Activated CD4-positive, alpha-beta memory T cell treated with anti-CD3 and anti-CD28 coated beads for 36 hours (primary cell): ENCODE measurements at regions of chr19 and their contacts with region 1.

Region 1: GRCh38 chr19:11987405-11988281 is 22.8 kb downstream of the ZNF763 start:
- DNase-seq: peak; percentile 97
- H3K4me3 Mint-ChIP-seq: peak overlapping the region; percentile 93
- H3K27ac Mint-ChIP-seq: peak overlapping the region; percentile 93
- H3K4me1 Mint-ChIP-seq: peaks cover 18% of the 10 kb centered on the region
- H3K27me3 Mint-ChIP-seq: no peaks in the 10 kb centered on the region

Region 2: DNA sequence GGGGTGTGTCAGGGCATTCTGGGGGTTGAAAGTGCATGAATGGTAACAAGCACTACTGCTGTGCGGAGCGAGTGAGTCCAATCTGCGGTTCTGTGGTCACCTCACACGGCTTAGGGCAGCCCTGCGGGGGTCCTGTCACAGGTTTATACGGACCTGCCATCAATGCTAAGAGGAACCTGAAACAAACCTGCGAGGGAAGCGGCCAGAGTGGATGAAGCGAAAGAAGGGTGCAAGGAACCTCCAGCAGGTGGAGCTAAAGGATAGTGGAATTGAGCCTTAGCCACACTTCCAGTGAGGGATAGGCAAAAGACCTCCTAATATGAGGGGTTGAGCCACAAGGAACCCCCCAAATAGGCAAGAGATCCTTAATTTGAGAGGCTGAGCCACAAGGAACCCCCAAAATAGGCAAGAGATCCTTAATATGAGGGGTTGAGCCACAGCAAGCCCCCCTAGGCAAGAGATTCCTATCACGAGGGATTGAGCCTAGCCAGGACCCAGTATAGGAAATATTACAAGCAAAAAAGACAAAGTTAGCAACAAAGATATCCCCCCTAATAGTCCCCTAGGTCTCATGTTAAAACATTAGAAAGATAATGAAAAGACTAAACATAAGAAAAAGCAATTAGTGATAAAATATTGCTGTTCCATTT is 106.4 kb before region 1 on chr19:
- CTCF ChIA-PET with region 1: interaction called, 29 read pairs
- POLR2A ChIA-PET with region 1: no interaction called
- intact Hi-C with region 1: loop called (anchors 5 kb)
- DNase-seq: peak; percentile 69
- H3K4me3 Mint-ChIP-seq: no peak overlapping the region
- H3K27ac Mint-ChIP-seq: no peak overlapping the region
- H3K4me1 Mint-ChIP-seq: no peaks in the 10 kb centered on the region
- H3K27me3 Mint-ChIP-seq: no peaks in the 10 kb centered on the region

Region 3: DNA sequence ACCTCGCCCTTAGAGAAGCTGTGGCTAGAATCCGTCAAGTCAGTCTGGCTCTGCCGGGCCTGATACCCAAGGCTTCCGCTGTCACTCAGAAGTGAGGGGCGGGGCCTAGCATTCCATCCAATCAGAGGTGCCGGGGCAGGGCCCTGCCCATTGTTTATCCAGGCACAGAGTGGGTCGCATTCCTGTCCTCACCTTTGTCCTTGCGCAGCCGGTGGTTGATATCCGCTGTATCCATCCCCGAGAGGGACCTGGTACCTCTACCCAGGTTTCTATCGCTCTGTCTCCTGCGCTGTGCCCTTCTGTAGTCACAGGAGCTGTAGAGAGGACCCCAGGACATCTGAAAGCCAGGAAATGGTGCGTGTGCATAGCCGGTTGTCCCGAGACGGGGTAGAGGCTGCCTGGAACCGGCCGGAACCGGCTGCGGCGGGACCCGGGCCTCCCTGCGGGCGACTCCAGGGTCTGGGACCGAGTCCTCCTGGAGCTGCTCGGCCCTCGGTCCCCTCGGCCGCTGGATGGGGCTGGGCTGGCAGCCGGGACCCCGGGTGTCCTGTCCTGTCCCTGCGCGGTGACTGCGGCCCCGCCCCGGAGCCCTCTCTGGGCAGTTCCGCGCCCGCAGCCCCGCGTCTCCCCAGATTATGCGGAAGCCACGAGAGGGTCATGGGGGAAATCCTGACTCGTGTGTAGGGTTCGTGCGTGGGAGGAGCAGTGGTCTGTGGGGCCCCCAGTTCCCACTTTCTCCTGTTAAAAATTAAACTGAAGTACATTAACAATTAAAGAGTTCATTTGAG is 22.6 kb before region 1 on chr19 and contains the start of gene ZNF763:
- CTCF ChIA-PET with region 1: interaction called, 106 read pairs
- POLR2A ChIA-PET with region 1: interaction called, 8 read pairs
- intact Hi-C with region 1: loop called (anchors 1 kb)
- DNase-seq: peak; percentile 94
- H3K4me3 Mint-ChIP-seq: peak within 1 kb of the TSS; percentile 88
- H3K27ac Mint-ChIP-seq: peak within 1 kb of the TSS; percentile 79
- H3K4me1 Mint-ChIP-seq: peaks cover 20% of the 10 kb centered on the region
- H3K27me3 Mint-ChIP-seq: no peaks in the 10 kb centered on the region
- total RNA-seq, gene ZNF763: 0.97 to 1.6 TPM

Region 4: DNA sequence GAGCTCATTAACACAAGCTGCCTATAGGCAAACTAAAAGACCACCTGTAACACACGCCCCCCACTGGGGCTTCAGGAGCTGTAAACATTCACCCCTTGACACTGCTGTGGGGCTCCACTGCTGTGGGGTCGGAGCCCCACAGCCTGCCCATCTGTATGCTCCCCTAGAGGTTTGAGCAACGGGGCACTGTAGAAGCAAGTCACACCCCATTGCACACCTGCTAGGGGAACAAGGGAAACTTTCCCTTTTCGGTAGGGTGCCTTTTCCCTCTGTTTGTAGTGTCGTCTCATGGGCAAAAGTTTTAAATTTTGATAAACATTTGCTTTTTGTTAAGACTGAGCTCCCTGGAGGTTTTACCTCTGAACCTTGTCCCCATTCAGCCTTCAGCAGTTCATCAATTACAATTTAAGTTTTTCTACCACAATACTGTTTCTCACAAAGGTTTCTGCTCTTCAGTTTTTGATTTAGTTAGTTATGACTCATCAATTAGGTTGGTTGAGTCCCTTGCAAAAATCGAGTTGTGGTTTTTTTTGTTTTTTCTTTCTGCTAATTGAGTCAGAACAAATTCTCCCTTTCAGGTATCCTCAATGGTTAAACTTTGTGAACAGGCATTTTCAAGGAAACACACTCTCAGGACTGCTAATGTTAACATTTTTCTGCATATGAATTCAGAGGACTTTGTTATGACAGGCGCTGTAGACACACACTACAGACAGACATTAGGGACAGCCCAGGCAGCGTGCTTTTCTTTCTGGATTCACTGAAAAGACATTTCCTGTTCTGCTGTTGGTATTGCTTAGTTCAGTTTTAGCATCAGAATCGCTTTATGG is 12.7 kb after region 1 on chr19:
- CTCF ChIA-PET with region 1: interaction called, 6 read pairs
- POLR2A ChIA-PET with region 1: interaction called, 3 read pairs
- intact Hi-C with region 1: loop called (anchors 1 kb)
- DNase-seq: peak; percentile 54
- H3K4me3 Mint-ChIP-seq: no peak overlapping the region
- H3K27ac Mint-ChIP-seq: peak overlapping the region; percentile 72
- H3K4me1 Mint-ChIP-seq: peaks cover 20% of the 10 kb centered on the region
- H3K27me3 Mint-ChIP-seq: no peaks in the 10 kb centered on the region

Region 5: DNA sequence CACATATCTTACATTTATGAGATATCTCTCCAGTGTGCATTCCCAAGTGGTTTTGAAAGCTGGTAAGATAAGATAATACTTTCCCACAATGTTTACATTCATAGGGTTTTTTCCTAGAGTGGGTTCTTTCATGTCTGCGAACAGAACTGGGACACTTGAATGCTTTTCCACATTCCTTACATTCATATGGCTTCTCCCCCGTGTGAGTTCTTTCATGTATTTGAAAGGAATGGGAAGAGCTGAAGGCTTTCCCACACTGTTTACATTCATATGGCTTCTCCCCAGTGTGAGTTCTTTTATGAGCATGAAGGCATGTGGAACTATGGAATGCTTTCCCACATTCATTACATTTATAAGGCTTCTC is 28.1 kb after region 1 on chr19:
- CTCF ChIA-PET with region 1: no interaction called
- POLR2A ChIA-PET with region 1: no interaction called
- intact Hi-C with region 1: no loop called
- DNase-seq: no peak
- H3K4me3 Mint-ChIP-seq: no peak overlapping the region
- H3K27ac Mint-ChIP-seq: no peak overlapping the region
- H3K4me1 Mint-ChIP-seq: no peaks in the 10 kb centered on the region
- H3K27me3 Mint-ChIP-seq: no peaks in the 10 kb centered on the region

Region 6: GRCh38 chr19:12187625-12188024 is 200.0 kb after region 1 on chr19:
- CTCF ChIA-PET with region 1: no interaction called
- POLR2A ChIA-PET with region 1: no interaction called
- intact Hi-C with region 1: no loop called
- DNase-seq: no peak
- H3K4me3 Mint-ChIP-seq: no peak overlapping the region
- H3K27ac Mint-ChIP-seq: no peak overlapping the region
- H3K4me1 Mint-ChIP-seq: peaks cover 3% of the 10 kb centered on the region
- H3K27me3 Mint-ChIP-seq: no peaks in the 10 kb centered on the region

Region 7: DNA sequence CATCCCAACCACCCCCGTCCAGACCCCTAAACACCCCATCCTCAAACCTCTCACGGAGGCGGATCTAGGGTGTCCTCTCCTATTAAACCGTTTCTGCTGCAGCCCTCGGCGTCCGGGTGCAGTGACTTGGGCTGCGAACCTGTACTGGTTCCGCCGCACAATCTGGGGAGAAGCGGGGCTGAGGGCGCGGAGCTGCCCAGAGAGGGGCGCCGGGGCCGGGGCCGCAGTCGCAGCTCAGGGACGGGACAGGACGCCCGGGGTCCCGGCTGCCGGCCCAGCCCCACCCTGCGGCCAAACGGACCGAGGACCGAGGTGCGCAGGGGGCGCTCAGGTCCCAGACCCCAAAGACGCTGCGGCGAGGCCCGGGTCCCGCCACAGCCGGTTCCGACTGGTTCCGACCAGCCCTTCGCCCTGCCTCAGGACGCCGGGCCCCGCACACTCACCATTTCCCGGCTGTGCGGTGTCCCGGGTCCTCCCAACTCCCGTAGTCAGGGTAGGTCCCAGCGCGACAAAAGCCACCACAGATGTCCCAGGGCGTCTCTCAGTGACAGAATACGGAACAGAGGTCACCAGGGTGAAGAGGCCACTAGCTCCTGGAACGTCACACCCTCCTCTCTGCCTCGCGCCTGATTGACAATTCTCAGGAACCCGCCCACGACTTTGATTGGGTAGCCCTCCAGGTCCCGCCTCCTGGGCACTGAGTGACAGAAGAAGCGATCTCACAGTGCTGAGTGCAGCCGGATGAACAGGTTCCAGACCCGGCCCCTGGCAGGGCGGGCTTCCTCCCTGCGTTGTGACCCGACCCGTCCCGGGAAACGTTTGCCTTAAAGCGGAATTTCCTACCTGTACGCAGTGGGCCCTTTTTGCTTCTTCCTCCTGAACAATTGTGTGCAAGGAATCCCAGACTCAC is 306.9 kb after region 1 on chr19 and contains the start of gene ZNF44:
- CTCF ChIA-PET with region 1: no interaction called
- POLR2A ChIA-PET with region 1: no interaction called
- intact Hi-C with region 1: loop called (anchors 1 kb)
- DNase-seq: peak; percentile 99
- H3K4me3 Mint-ChIP-seq: peak within 1 kb of the TSS; percentile 98
- H3K27ac Mint-ChIP-seq: peak within 1 kb of the TSS; percentile 98
- H3K4me1 Mint-ChIP-seq: peaks cover 27% of the 10 kb centered on the region
- H3K27me3 Mint-ChIP-seq: no peaks in the 10 kb centered on the region
- total RNA-seq, gene ZNF44: 7.5 to 8.9 TPM

Region 8: DNA sequence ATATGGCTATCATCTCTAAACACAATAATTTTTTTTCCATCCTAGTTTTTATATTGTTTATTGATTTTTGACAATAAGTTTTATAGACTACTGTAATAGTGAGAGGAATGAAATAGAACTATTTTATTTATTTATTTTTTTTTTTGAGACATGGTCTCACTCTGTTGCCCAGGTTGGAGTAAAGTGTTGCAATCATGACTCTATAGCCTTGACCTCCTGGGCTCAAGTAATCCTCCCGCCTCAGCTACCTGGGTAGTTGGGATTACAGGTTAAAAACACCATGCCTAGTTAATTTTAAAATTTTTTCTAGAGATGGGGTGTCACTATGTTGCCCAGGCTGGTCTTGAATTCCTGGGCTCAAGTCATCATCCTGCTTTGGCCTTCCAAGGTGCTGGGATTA is 386.4 kb after region 1 on chr19:
- CTCF ChIA-PET with region 1: no interaction called
- POLR2A ChIA-PET with region 1: no interaction called
- intact Hi-C with region 1: no loop called
- DNase-seq: no peak
- H3K4me3 Mint-ChIP-seq: no peak overlapping the region
- H3K27ac Mint-ChIP-seq: no peak overlapping the region
- H3K4me1 Mint-ChIP-seq: no peaks in the 10 kb centered on the region
- H3K27me3 Mint-ChIP-seq: no peaks in the 10 kb centered on the region